ENCODE measurements at regions of chr3 and their contacts with region 1.

Region 1: GRCh38 chr3:181210275-181210674 is 220.7 kb upstream of the DNAJC19 start:
- DNase-seq: peak; percentile 12
- ATAC-seq: no peak
- H3K4me3 ChIP-seq: no peak overlapping the region
- H3K27ac ChIP-seq: no peak overlapping the region
- H3K4me1 ChIP-seq: no peaks in the 10 kb centered on the region
- H3K27me3 ChIP-seq: peaks cover 33% of the 10 kb centered on the region
- CTCF ChIP-seq: peak in 2 of 3 experiments; percentile 35 to 38; a peak in 4 of 6 replicates
- POLR2A ChIP-seq: no peak
- RAD21 ChIP-seq: peak; percentile 54

Region 2: GRCh38 chr3:181278468-181279238 is 68.4 kb after region 1 on chr3:
- CTCF ChIA-PET with region 1: interaction called, 17 read pairs
- POLR2A ChIA-PET with region 1: no interaction called
- RAD21 ChIA-PET with region 1: no interaction called
- intact Hi-C with region 1: no loop called
- DNase-seq: no peak
- ATAC-seq: no peak
- H3K4me3 ChIP-seq: no peak overlapping the region
- H3K27ac ChIP-seq: no peak overlapping the region
- H3K4me1 ChIP-seq: no peaks in the 10 kb centered on the region
- H3K27me3 ChIP-seq: peaks cover 49% of the 10 kb centered on the region
- CTCF ChIP-seq: peak; percentile 14 to 38 (median 16); a peak in 3 of 6 replicates
- POLR2A ChIP-seq: no peak
- RAD21 ChIP-seq: peak; percentile 50

Region 3: DNA sequence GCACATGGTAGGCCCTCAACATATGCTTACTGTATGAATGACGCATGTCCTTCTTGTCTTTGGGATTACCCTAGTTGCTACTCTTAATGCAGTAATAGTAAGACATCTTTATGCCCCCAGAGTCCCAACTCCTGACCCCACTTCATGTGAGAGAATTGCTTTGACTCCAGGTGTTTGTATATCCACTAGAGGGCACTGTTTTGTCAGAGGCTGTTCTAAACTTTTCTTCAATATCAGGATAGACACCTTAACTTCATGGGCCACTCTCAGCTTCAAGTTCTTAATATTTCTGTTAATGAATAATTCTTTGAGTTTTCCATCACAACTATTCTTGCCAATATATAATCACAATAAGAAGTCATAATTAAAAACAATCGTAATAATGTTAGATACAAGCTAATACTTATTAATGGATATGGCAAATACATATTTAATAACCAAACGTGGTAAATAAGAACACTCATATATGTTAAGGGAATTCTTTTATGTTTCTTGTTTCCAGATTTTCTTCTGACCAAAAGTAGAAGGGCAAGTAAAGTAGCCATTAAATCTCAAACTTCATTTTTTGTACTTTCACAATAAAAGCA is 116.5 kb after region 1 on chr3:
- CTCF ChIA-PET with region 1: interaction called, 13 read pairs
- POLR2A ChIA-PET with region 1: no interaction called
- RAD21 ChIA-PET with region 1: no interaction called
- intact Hi-C with region 1: no loop called
- DNase-seq: peak; percentile 15
- ATAC-seq: peak; percentile 73; the same call in 1 of the 2 replicates
- H3K4me3 ChIP-seq: no peak overlapping the region
- H3K27ac ChIP-seq: no peak overlapping the region
- H3K4me1 ChIP-seq: no peaks in the 10 kb centered on the region
- H3K27me3 ChIP-seq: peaks cover 20% of the 10 kb centered on the region
- CTCF ChIP-seq: peak; percentile 34 to 75 (median 66); a peak in 5 of 6 replicates
- POLR2A ChIP-seq: no peak
- RAD21 ChIP-seq: peak; percentile 60

Measured in HCT116 (cell line).